Pancreas (tissue), 10 donors: ENCODE measurements at regions of chr9 and their contacts with region 1.

Region 1: DNA sequence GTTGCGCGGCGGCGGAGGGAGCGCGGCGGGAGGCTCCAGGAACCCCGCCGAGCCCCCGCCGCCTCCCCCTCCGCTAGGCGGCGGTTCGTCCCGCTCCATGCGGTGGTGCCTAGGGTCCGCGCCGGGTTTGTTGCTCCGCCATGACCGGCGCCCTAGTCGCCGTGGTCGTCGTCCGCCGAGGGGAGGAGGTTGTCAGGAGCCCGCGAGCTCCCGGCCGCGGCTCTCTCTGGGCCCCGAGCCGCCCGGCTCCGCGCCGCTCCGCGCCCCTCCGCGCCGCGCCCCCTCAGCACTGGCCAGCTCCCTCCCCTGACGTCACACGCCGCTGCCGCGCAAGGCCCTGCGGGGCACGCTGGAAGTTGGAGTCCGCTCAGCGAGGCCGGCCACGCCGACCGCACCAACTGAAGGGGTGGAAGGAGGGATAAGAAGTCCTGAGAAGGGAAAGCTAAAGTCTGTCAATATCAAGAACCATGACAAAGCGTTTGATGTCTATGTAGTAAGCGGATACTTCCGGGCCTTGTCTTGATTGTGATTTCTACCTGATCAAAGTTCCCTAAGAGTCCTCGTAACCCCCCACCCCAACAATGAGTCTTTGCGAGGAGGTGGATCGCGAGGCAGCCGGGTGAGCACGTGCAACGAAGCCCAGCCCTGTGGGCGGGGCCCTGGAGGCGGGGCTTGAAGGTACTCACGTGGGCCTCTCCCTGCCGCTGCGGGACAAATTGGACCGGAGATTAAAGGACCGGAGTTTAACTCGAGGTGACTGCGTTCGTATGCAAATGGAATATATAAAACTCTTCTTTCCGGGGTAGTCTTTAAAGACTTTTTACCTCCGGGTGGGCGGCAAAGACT is at the start of gene NR6A1:
- DNase-seq: peak; percentile 96 to 98 (median 98)
- ATAC-seq: peak; percentile 88 to 95 (median 90)
- H3K4me3 ChIP-seq: peak within 1 kb of the TSS; percentile 93 to 99 (median 96)
- H3K27ac ChIP-seq: peak within 1 kb of the TSS; percentile 74 to 84 (median 80)
- H3K4me1 ChIP-seq: peaks cover 0 to 13% (median 5%) of the 10 kb centered on the region in 3 donors
- H3K27me3 ChIP-seq: no peaks in the 10 kb centered on the region
- CTCF ChIP-seq: no peak
- total RNA-seq, gene NR6A1: 2.1 to 3.9 (median 2.5) TPM

Region 2: GRCh38 chr9:124574534-124575341 is 196.5 kb before region 1 on chr9:
- intact Hi-C with region 1: no loop called
- DNase-seq: no peak
- ATAC-seq: no peak
- H3K4me3 ChIP-seq: no peak overlapping the region
- H3K27ac ChIP-seq: no peak overlapping the region
- H3K4me1 ChIP-seq: peaks cover 0 to 4% (median 0%) of the 10 kb centered on the region in 3 donors
- H3K27me3 ChIP-seq: no peaks in the 10 kb centered on the region
- CTCF ChIP-seq: no peak

Region 3: DNA sequence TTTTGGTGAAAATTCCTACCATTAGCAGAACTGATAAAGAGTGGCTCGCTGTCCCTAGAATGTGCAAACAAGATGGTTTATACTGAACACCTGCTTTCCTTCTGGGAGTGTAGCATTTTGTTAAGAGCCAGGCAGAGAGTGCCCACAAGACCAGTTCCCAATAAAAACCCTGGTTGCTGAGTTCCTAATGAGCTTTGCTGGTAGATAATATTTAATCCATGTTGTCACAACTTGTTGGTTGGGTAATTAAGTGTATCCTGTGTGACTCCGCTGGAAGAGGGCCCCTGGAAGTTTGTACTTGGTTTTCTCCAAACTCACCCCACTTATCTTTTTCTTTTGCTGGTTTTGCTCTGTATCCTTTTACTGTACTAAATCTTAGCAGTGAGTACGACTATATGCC is 209.2 kb after region 1 on chr9:
- intact Hi-C with region 1: no loop called
- DNase-seq: no peak
- ATAC-seq: peak in 1 of 4 donors; percentile 44
- H3K4me3 ChIP-seq: no peak overlapping the region
- H3K27ac ChIP-seq: no peak overlapping the region
- H3K4me1 ChIP-seq: no peaks in the 10 kb centered on the region
- H3K27me3 ChIP-seq: no peaks in the 10 kb centered on the region
- CTCF ChIP-seq: no peak

Region 4: DNA sequence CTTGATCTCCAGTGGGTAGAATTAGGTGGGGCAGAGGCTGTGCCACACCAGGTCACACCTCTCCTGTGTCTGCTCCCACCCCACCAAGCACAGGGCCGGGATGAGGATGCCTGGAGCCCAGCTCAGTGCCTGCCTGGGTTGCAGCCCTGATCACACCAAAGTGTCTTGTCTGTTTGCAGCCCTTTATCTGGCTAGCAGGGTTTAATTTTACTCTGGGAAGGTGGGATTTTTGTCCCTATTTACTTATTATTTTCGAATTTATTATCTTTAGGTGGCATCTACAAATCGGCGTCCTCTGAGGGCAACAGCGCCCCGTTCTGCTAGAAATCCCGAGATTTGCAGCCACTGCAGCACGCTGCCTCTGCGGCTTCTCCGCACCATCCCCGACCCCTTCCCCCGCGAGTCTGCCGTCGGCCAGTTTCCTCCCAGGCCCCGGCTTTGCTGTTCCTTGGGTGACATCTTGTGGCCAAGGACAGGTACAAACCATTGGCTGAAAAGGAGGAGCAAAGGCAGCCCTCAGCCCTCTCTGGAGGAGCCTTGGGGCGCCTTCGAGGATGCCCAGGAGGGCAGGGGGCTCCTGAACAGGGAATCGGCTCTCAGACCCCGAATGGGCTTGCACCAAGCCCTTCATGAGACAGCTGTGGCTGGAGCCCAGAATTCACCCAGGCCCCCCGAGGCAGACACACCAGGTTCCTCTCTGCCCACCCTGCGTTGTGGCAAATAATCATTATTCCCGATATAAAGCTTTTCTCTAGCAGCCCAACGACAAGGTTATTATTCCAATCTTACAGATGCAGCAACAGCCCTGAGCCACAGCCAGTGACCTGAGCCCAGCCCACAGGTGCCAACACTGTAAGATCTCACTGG is 603.4 kb after region 1 on chr9:
- intact Hi-C with region 1: loop called in 1 of 3 experiments (anchors 10 kb)
- DNase-seq: peak; percentile 53 to 87 (median 70)
- ATAC-seq: peak; percentile 80 to 95 (median 94)
- H3K4me3 ChIP-seq: peak overlapping the region in 1 of 4 donors; percentile 33
- H3K27ac ChIP-seq: no peak overlapping the region
- H3K4me1 ChIP-seq: peaks cover 0 to 6% (median 0%) of the 10 kb centered on the region in 3 donors
- H3K27me3 ChIP-seq: no peaks in the 10 kb centered on the region
- CTCF ChIP-seq: peak; percentile 33 to 70 (median 67)